A673 (cell line): ENCODE measurements at regions of chrX and their contacts with region 1.

Region 1: DNA sequence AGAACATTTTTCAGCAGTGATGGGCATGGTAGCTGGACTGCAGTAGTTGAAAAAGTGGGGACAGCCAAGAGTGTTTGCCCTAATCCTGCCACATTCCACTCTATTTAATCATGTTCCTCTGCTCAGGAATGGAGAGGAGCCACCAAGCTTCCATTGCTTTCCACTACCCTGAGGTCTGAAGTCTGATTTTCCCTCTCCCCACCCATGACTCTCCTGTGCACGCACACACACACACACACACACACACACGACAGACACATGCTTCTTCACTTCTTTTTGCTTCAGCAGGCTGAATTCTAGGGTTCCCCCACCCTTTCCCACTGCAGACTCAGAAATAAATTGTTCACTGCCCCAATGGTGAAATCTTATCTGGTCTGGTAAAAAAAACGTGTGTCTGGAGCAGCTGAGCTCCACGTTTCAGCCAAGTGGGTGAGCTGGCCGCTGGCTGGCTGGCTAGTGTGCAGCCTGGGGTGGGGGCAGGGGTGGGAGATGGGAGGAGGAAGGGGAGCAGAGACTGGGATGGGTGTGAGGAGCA is 142.7 kb upstream of the NALF2 start:
- DNase-seq: no peak
- H3K4me3 ChIP-seq: no peak overlapping the region
- H3K27ac ChIP-seq: no peak overlapping the region
- H3K4me1 ChIP-seq: peaks cover 19% of the 10 kb centered on the region
- H3K27me3 ChIP-seq: no peaks in the 10 kb centered on the region
- CTCF ChIP-seq: no peak

Region 2: DNA sequence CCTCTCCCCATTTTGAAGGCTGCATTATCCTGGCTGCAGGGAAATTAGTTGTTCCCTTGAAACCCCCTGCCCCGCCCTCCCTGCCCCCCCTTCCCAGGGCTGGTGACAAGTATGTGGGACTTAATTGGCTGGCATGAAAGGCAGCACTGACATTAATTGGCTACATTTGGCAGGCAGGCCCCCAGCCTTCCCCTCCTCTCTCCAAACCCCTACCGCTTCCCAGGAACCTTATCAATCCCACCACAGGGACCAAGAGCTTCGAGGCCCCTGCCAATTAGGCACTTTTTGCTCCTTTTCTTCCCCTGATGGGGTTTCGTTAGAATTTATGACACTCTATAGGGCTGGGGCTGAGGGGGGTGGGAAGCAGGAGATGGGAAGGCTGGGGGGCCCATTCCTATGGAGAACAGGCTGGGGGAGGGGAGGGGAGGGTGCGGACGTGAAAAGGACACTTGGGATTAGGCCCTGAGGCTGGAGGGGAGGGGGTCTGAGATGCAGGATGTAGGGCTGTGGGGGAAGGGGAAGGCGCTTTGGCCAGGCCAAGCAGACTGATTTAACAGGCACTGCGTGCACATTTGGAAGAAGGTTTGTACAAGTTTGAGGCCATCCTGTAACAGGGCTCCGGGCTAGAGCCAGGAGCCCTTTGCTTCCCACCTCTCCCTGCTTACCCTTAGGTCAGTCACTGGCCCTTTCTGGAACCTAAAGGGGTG is 480.4 kb before region 1 on chrX:
- CTCF ChIA-PET with region 1: no interaction called
- POLR2A ChIA-PET with region 1: interaction called, 17 read pairs
- intact Hi-C with region 1: no loop called
- DNase-seq: no peak
- H3K4me3 ChIP-seq: no peak overlapping the region
- H3K27ac ChIP-seq: no peak overlapping the region
- H3K4me1 ChIP-seq: no peaks in the 10 kb centered on the region
- H3K27me3 ChIP-seq: peaks cover 4% of the 10 kb centered on the region
- CTCF ChIP-seq: no peak

Region 3: GRCh38 chrX:69305333-69306062 is 55.9 kb before region 1 on chrX:
- CTCF ChIA-PET with region 1: no interaction called
- POLR2A ChIA-PET with region 1: no interaction called
- intact Hi-C with region 1: no loop called
- DNase-seq: peak; percentile 66
- H3K4me3 ChIP-seq: no peak overlapping the region
- H3K27ac ChIP-seq: peak overlapping the region; percentile 79
- H3K4me1 ChIP-seq: peaks cover 38% of the 10 kb centered on the region
- H3K27me3 ChIP-seq: no peaks in the 10 kb centered on the region
- CTCF ChIP-seq: no peak

Region 4: DNA sequence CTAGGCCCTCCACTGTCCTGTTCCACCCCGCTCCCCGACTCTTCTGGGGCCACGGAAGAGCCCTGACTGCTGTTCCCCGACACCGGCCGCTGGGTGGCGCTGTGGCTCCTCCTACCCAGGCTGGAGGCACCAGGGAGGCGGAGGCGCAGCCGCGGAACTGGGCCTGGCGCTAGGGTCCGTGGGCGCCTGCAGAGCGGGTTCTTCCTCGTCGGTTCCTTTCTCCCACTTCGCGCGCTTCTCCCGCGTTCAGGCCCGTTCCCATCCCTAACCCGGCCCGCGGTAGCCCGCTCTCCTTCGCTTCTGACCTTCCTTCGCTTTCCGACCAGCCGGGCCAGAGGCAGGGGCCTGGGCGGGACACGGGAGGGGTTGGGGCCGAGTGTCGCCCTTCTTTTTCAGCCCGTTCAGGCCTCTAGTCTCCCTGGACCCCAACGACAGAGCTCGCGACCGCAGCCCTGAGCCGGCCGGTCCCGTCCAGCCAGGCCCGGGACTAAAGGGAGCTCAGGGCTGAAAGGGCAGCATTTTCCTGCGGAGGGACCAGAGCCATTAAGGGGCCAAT is 177.0 kb after region 1 on chrX:
- CTCF ChIA-PET with region 1: no interaction called
- POLR2A ChIA-PET with region 1: no interaction called
- intact Hi-C with region 1: no loop called
- DNase-seq: peak; percentile 68
- H3K4me3 ChIP-seq: peak overlapping the region; percentile 28
- H3K27ac ChIP-seq: no peak overlapping the region
- H3K4me1 ChIP-seq: no peaks in the 10 kb centered on the region
- H3K27me3 ChIP-seq: no peaks in the 10 kb centered on the region
- CTCF ChIP-seq: peak; percentile 84